ENCODE measurements at regions of chr4 and their contacts with region 1.

Region 1: DNA sequence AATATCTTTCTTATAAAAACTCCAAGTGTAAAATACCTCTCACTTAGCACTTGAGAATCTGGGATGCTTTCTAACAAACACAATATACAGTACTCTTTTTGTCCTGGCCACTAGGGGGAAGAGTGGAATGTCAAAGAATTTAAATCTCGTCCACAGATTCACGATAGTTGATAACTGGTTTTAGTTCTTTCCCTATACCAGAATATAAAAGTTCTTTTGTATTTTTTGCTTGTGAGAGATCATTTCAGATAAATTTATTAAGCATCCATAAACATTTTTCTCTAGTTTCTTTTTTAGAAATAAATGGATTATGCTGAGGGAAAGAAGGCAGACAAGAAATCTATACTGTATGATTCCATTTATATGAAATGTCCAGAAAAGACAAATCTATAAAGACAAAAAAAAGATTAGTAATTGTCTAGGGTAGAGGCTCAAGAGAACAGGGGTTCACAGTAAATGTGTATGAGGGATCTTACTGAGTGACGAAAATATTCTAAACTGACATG is 50.4 kb downstream of the MGARP start:
- DNase-seq: no peak

Region 2: DNA sequence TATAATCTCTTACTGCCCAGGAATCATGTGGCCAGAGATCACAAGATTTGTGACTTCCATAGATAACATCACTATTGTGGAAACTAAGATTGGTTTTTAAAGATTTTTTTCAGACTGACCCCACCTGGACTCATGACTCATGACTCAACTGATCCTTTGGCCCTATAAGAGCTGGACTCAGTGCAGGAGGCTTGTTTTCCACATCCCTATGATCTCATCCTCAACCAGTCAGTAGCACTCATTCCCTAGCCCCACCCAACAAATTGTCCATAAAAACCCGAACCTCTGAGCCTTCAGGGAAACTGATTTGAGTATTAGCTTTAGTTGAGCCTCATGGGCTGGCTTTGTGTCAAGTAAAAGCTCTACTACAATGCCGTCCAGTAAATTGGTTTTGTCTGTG is 221.9 kb before region 1 on chr4:
- intact Hi-C with region 1: no loop called
- DNase-seq: no peak

Region 3: DNA sequence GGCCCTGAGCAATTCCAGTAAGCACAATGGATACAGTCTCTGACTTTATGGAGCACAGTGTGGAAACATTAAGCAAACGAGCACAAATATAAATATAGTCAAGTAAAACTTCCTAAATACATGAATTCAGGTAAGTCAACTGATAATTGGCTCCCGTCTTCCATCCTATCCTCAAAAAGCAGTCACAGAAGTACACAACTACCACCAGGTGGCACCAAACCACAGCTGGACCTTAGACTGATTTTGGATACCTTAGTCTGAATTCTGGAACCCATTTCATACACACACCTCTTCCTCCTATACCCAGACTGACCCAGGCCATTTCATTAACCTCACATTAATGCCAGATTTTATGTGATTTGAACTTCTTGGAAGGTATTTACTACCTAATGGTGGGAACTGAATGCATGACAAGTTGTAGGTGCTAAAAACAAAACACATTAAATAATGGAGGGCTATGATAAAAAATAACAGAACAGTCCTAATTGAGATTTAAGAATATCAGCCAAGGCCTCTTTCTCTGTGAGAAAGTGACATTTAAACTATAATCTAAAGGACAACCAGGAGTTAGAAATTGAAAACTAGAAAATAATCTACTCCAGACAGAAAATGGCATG is 130.1 kb before region 1 on chr4:
- intact Hi-C with region 1: loop called (anchors 5 kb)
- DNase-seq: no peak

Region 4: GRCh38 chr4:139556747-139557555 is 327.4 kb after region 1 on chr4:
- intact Hi-C with region 1: no loop called
- DNase-seq: peak; percentile 85

Measured in cardiac septum (tissue), 1 donor.